Sigmoid colon (tissue), 7 donors: ENCODE measurements at regions of chr9 and their contacts with region 1.

Region 1: DNA sequence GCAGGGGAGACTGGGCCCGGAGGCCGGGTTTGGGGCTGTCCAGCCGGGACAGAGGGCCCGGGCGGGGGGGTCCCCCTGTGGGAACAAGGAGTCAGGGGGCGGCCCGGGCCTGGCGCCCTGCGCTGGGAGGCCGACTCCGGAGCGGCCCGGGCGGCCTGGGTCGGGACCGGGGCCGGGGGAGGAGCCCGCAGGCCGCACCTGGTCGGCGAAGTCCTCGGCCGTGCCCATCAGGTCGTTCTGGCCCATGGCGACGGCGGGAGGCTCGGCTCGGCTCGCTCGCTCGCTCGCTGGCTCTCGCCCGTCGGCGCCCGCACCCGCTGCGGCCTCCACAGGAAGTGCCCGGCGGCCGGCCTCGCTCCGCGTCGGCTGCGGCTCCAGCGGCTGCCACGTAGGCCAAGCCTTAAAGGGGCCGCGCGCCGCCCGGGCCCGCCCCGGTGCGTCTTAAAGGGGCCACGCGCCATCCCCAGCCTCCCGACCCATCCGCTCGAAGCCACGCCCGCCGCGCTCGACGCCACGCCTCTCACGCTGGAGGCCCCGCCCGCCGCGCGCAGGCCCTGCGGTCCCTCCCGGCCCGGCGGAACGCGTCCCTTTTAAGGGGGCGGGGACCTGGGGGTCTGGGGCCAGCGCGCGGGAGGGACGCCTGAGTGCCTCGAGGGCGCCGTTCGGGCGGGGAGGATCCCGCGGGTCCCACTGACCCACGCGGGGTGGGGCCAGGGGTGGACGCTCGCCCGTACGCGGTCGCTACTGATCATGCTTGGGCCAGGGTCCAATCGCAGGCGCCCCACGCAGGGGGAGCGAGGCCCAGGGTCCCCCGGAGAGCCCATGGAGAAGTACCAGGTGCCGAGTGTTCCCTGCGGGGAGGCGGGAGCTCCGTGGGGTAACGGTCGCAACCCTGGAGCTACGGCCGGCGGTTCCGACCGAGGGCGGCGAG is at the starts of genes STKLD1 and SURF4:
- DNase-seq: peak; percentile 97
- H3K4me3 ChIP-seq: peak within 1 kb of the TSS; percentile 80 to 99 (median 88)
- H3K27ac ChIP-seq: peak within 1 kb of the TSS; percentile 93 to 99 (median 94)
- H3K4me1 ChIP-seq: peaks cover 0 to 54% (median 46%) of the 10 kb centered on the region in 4 donors
- H3K27me3 ChIP-seq: no peaks in the 10 kb centered on the region
- CTCF ChIP-seq: peak in 1 of 4 experiments; percentile 14
- EP300 ChIP-seq: no peak
- POLR2A ChIP-seq: no peak
- total RNA-seq, gene STKLD1: 0.49 to 8.3 (median 2.1) TPM in 3 of 4 donors, not detected in the other
- total RNA-seq, gene SURF4: 73.4 to 88.8 (median 84.3) TPM

Region 2: GRCh38 chr9:133335878-133336811 is 39.8 kb before region 1 on chr9 and contains the start of gene SURF6:
- intact Hi-C with region 1: loop called (anchors 1 kb)
- DNase-seq: peak; percentile 93
- H3K4me3 ChIP-seq: peak within 1 kb of the TSS; percentile 84 to 94 (median 88)
- H3K27ac ChIP-seq: peak within 1 kb of the TSS; percentile 75 to 83 (median 80)
- H3K4me1 ChIP-seq: peaks cover 0 to 28% (median 25%) of the 10 kb centered on the region in 4 donors
- H3K27me3 ChIP-seq: no peaks in the 10 kb centered on the region
- CTCF ChIP-seq: no peak
- EP300 ChIP-seq: no peak
- POLR2A ChIP-seq: no peak
- total RNA-seq, gene SURF6: 13.9 to 20.1 (median 16.2) TPM

Region 3: DNA sequence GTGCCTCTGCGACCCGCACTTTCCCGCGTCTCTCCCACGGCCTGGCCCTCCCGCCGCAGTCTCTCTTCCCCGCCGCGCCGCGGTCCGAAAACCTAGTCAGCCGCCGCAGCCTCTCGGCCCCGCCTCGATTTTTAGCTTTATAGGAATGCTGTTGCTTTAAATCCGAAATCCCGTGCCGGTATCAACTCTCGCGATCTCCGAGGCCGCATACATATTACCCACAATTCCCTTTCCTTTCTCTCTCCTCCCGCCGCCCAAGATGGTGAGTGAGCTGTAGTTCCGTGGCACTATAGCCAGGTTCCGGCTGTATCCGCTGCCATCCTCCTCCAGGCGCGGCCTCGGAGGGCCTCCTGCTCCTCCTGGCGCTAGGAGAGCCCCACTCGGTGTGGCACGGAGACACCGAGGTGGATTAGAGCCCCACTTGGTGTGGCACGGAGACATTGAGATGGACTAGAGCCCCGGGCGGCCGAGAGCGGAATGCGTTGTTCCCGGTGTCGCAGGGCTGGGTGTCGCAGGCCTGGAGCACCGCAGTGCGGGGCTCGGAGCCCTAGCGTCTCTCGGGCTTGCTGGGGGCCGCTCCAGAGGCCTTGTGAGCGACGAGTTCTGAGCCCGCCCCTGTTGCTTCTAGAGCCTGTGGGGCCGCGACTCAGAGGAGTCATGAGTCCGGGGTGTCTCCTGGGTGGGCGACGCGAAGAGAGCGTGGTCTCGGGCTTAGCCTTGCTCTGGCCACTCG is 27.8 kb before region 1 on chr9 and contains the starts of genes MED22 and RPL7A:
- intact Hi-C with region 1: loop called (anchors 1 kb)
- DNase-seq: peak; percentile 97
- H3K4me3 ChIP-seq: peak within 1 kb of the TSS; percentile 78 to 96 (median 88)
- H3K27ac ChIP-seq: peak within 1 kb of the TSS; percentile 90 to 93 (median 92)
- H3K4me1 ChIP-seq: peaks cover 0 to 31% (median 27%) of the 10 kb centered on the region in 4 donors
- H3K27me3 ChIP-seq: no peaks in the 10 kb centered on the region
- CTCF ChIP-seq: no peak
- EP300 ChIP-seq: no peak
- POLR2A ChIP-seq: peak; percentile 90 to 92
- total RNA-seq, gene MED22: 17.2 to 31.3 (median 28.4) TPM
- total RNA-seq, gene RPL7A: 2,027 to 2,561 (median 2,271) TPM

Region 4: DNA sequence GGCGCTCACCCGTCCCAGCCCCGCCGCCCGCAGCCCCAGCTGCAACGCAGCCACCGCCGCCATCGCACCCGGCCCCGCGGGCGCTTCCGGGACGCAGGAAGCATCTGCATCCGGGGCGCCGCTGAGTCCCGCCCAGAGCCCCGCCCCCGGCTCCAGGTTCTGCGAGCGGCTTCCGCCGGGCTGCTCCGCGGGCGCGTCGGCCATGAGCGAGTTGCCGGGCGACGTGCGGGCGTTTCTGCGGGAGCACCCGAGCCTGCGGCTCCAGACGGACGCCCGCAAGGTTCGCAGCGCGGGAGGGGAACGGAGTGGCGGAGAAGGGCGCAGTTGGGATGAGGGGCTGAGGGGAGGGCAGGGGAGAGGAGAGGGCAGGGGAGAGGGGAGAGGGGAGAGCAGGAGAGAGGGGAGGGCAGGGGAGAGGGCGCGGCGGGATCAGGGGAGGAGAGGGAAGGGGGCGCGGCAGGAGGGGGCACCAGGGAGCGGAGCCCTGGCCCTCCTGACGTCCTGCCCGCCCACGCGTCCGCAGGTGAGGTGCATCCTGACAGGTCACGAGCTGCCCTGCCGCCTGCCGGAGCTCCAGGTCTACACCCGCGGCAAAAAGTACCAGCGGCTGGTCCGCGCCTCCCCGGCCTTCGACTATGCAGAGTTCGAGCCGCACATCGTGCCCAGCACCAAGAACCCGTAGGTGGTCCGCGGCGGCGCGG is 19.4 kb before region 1 on chr9 and contains the starts of genes SURF1 and SURF2:
- intact Hi-C with region 1: loop called (anchors 1 kb)
- DNase-seq: peak; percentile 93
- H3K4me3 ChIP-seq: peak within 1 kb of the TSS; percentile 62 to 86 (median 75)
- H3K27ac ChIP-seq: peak within 1 kb of the TSS; percentile 69 to 87 (median 78)
- H3K4me1 ChIP-seq: peaks cover 0 to 31% (median 27%) of the 10 kb centered on the region in 4 donors
- H3K27me3 ChIP-seq: no peaks in the 10 kb centered on the region
- CTCF ChIP-seq: no peak
- EP300 ChIP-seq: no peak
- POLR2A ChIP-seq: no peak
- total RNA-seq, gene SURF1: 33.8 to 98.7 (median 75.7) TPM
- total RNA-seq, gene SURF2: 10.2 to 32.3 (median 15.2) TPM

Region 5: DNA sequence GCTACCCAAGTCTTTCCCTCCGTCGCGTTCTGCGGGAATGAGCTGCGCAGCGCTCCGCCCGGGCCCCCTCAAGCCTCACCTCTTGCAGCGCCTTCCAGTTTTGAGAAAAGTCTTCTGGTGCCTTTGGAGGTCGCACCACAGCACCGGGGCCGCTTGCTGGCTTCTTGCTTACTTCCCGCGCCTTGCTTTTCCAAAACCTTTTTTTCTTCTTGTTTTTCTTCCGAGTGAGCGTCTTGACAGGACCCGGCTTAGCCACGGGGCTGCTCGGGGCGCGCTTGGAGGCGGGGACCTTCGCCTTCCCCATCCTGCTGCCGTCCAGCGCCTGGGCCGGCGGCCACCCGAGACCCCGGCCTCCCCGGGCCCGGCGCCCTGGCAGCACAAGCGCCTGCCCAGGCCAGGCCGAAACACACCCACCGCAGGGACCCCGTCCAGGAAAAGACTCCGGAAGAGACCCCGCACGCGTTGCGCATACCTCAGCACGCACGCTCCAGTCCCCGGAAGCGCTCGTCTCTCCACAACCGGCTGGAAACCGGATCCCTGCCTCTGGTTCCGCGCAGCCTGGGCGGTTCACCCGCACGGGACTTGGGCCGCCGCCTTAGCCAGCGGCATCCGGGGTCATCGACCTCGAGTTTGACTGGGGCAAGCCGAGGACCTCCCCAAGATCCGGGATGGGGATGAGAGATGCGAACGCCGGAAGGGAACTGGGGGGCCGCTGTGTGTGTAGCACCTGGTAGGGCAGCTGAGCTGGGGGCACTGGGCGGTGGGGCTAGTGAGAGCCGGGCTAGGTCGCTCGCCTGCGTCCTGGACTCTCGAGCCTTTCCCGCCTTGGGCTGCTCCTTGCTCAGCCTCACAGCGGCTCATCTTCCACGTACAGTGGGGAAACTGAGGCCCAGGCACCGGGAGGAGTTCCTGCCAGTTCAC is 41.8 kb after region 1 on chr9 and contains the start of gene REXO4:
- intact Hi-C with region 1: loop called (anchors 5 kb)
- DNase-seq: peak; percentile 90
- H3K4me3 ChIP-seq: peak within 1 kb of the TSS; percentile 65 to 88 (median 71)
- H3K27ac ChIP-seq: peak within 1 kb of the TSS; percentile 81 to 87 (median 84)
- H3K4me1 ChIP-seq: peaks cover 0 to 31% (median 23%) of the 10 kb centered on the region in 4 donors
- H3K27me3 ChIP-seq: no peaks in the 10 kb centered on the region
- CTCF ChIP-seq: no peak
- EP300 ChIP-seq: no peak
- POLR2A ChIP-seq: no peak
- total RNA-seq, gene REXO4: 16.3 to 22.2 (median 18.8) TPM

Region 6: DNA sequence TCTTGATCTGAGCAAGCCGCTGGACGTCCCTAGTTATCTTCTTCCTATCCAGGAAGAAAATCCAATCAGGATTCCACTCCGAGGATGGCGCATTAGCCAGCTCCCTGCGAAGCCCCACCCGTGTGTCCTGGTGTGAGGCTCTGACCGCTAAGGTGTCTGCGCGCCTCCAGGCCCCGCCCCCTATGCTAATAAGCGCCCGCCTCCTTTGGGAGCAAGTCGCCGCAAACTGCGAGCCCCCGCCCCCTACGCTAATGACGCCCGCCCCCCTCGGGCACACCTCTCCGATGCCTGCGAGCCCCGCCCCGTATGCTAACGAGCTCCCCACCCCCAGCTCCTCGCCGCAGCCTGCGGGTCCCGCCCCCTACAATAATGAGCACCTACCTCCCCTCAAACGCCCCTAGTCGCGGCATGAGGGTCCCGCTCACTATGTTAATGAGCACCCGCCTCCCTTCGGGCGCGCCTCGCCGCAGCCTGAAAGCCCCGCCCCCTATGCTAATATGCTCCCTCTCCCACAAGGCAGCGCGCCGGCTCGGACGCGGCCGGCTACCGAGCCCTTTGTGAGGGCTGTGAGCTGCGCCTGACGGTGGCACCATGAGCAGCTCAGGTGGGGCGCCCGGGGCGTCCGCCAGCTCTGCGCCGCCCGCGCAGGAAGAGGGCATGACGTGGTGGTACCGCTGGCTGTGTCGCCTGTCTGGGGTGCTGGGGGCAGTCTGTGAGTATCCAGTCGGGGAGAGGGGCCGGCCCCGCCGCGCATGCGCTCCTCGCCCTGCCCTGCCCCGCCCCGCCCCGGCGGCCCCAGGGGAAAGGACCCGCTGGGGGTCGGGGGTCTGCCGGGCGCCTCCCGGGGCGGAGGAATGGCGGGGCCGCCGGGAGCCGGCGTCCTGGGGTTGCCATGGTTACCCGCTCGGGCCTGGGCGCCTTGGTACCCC is 83.8 kb after region 1 on chr9 and contains the start of gene CACFD1:
- intact Hi-C with region 1: loop called (anchors 2 kb)
- DNase-seq: peak; percentile 99
- H3K4me3 ChIP-seq: peak within 1 kb of the TSS; percentile 66 to 91 (median 84)
- H3K27ac ChIP-seq: peak within 1 kb of the TSS; percentile 92 to 97 (median 95)
- H3K4me1 ChIP-seq: peaks cover 0 to 21% (median 18%) of the 10 kb centered on the region in 4 donors
- H3K27me3 ChIP-seq: no peaks in the 10 kb centered on the region
- CTCF ChIP-seq: no peak
- EP300 ChIP-seq: no peak
- POLR2A ChIP-seq: peak; percentile 81 to 88
- total RNA-seq, gene CACFD1: 6.7 to 13.4 (median 8.9) TPM

Region 7: DNA sequence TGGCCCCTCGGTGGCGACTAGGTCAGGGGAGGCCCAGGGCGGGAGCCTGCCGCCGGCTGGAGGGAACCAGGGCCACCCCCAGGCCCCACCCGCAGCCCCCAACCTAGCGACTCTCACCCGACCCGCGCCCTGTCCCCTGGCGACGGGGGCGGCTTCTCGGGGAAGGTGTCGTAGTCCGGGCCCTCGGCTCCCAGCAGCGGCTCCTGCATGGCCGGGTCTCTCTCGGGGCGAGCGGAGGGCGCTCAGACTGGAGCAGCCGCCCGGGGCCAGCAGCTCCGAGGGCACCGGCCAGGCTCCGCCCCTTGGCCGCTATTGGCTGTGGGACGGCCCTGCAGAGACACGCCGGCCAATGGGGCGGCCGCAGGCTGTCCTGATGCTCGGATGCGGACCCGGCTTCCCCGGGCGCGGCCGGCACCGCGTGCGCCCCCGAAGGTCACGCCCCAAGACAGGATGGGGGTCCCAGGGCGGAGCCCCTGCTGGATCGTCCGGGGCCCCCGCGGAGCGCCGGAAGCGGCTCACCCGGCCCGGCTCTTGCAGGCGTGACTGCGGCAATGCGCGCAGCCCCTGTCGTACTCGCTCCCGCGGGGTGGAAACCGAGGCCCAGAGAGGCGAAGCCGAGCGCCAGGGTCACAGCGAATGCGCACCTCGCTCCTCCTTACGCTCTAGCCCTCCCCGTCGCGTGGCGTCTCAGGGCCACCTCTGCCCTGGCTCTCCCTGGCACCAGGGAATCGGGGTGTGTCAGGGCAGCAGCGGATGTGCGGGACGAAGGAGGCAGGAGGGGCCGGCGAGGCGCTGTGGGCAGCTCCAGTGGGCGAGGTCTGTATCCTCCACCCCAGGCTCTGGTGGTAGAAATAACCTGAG is 103.1 kb after region 1 on chr9 and contains the start of gene SLC2A6:
- intact Hi-C with region 1: no loop called
- DNase-seq: peak; percentile 92
- H3K4me3 ChIP-seq: peak within 1 kb of the TSS; percentile 26 to 64 (median 50)
- H3K27ac ChIP-seq: peak within 1 kb of the TSS; percentile 44 to 71 (median 52)
- H3K4me1 ChIP-seq: peaks cover 0 to 22% (median 17%) of the 10 kb centered on the region in 4 donors
- H3K27me3 ChIP-seq: no peaks in the 10 kb centered on the region
- CTCF ChIP-seq: no peak
- EP300 ChIP-seq: no peak
- POLR2A ChIP-seq: no peak
- total RNA-seq, gene SLC2A6: 1.4 to 2.7 (median 2.0) TPM

Region 8: GRCh38 chr9:133532937-133533668 is 157.1 kb after region 1 on chr9:
- intact Hi-C with region 1: no loop called
- DNase-seq: peak; percentile 83
- H3K4me3 ChIP-seq: no peak overlapping the region
- H3K27ac ChIP-seq: peak overlapping the region in 2 of 4 donors; percentile 66 to 70
- H3K4me1 ChIP-seq: peaks cover 0 to 45% (median 37%) of the 10 kb centered on the region in 4 donors
- H3K27me3 ChIP-seq: no peaks in the 10 kb centered on the region
- CTCF ChIP-seq: peak; percentile 53 to 85 (median 73)
- EP300 ChIP-seq: no peak
- POLR2A ChIP-seq: no peak